OCI-LY7 (cell line): ENCODE measurements at regions of chr12 and their contacts with region 1.

Region 1: GRCh38 chr12:15522565-15523187 is 200.4 kb downstream of the PTPRO start:
- DNase-seq: peak; percentile 62
- H3K4me3 ChIP-seq: no peak overlapping the region
- H3K27ac ChIP-seq: no peak overlapping the region
- H3K4me1 ChIP-seq: peaks cover 15% of the 10 kb centered on the region
- CTCF ChIP-seq: peak; percentile 86

Region 2: DNA sequence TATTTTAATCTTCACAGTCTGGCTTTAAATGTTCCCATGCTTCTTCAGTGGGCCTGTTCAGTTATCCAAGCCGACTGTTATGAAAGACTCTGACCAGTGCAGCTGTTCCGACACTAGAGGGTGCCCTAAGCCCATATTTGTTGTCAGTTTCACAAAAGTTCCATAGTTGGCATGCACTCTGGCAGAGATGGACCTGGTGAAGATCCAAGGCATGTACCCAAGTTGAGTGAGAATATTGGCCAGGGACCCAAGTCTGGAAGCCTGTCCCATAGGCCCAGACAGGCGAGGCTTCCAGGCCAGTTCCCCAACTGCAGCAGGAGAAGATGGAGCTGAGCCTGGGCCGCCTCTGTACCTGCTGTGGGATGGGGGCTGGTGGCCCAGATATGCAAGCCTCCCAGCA is 798.9 kb before region 1 on chr12:
- CTCF ChIA-PET with region 1: no interaction called
- POLR2A ChIA-PET with region 1: no interaction called
- intact Hi-C with region 1: loop called (anchors 10 kb)
- DNase-seq: peak; percentile 73
- H3K4me3 ChIP-seq: no peak overlapping the region
- H3K27ac ChIP-seq: no peak overlapping the region
- H3K4me1 ChIP-seq: no peaks in the 10 kb centered on the region
- CTCF ChIP-seq: peak; percentile 89

Region 3: GRCh38 chr12:14803011-14803829 is 719.5 kb before region 1 on chr12 and contains the starts of genes C12orf60 and WBP11:
- CTCF ChIA-PET with region 1: no interaction called
- POLR2A ChIA-PET with region 1: no interaction called
- intact Hi-C with region 1: loop called (anchors 10 kb)
- DNase-seq: peak; percentile 98
- H3K4me3 ChIP-seq: peak within 1 kb of the TSS; percentile 77
- H3K27ac ChIP-seq: peak within 1 kb of the TSS; percentile 66
- H3K4me1 ChIP-seq: peaks cover 36% of the 10 kb centered on the region
- CTCF ChIP-seq: no peak
- total RNA-seq, gene C12orf60: 2.8 and 3.2 TPM in 2 replicates
- total RNA-seq, gene WBP11: 16.5 and 22.8 TPM in 2 replicates

Region 4: DNA sequence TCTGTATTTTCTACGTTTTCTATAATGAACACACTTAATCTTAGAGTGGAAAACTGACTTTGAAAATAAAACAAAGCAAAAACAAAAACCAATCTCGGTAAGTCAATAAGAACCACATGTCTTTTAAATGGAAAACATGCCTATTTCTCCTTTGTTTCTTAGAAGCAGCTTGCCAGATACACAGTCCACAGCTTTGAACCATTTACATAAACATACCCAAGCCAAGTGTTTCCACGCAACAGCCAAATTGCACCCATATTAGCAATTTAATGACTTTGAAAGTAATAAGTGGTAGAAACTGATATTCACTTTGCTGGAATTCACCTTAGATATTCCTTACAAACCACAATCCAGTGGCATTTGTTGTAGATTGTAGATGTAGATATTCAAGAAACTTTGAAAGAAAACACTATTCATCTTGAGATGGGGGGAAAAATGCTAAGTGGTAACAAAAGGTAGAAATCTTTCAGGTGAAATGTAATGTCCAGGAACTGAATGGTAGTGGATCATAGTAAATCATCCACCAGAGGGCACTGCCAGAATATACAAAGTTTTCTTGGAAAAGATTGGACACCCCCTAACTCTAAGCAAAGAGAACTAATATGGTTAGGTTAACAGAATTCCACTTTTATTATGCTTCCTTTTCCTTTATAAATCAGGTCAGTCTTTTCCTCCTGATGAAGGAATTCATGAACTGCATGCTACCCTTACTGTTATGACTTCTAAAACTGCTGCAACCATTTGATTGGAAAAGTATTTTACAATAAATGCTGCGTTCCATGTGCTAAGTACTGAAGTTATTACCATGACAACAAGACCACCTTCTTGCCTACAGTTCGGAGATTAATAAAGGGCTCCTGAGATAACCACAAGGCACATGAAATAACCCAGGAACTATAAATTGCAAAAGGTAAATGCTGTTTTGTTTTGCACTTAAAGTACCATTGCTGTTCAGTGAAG is 371.2 kb before region 1 on chr12:
- CTCF ChIA-PET with region 1: no interaction called
- POLR2A ChIA-PET with region 1: no interaction called
- intact Hi-C with region 1: loop called (anchors 10 kb)
- DNase-seq: peak; percentile 21
- H3K4me3 ChIP-seq: no peak overlapping the region
- H3K27ac ChIP-seq: no peak overlapping the region
- H3K4me1 ChIP-seq: no peaks in the 10 kb centered on the region
- CTCF ChIP-seq: peak; percentile 77

Region 5: GRCh38 chr12:15276088-15276698 is 246.5 kb before region 1 on chr12:
- CTCF ChIA-PET with region 1: no interaction called
- POLR2A ChIA-PET with region 1: interaction called, 6 read pairs
- intact Hi-C with region 1: loop called (anchors 1 kb)
- DNase-seq: peak; percentile 14
- H3K4me3 ChIP-seq: no peak overlapping the region
- H3K27ac ChIP-seq: no peak overlapping the region
- H3K4me1 ChIP-seq: no peaks in the 10 kb centered on the region
- CTCF ChIP-seq: peak; percentile 90

Region 6: GRCh38 chr12:15629108-15629507 is 106.4 kb after region 1 on chr12:
- CTCF ChIA-PET with region 1: no interaction called
- POLR2A ChIA-PET with region 1: no interaction called
- intact Hi-C with region 1: no loop called
- DNase-seq: no peak
- H3K4me3 ChIP-seq: no peak overlapping the region
- H3K27ac ChIP-seq: no peak overlapping the region
- H3K4me1 ChIP-seq: no peaks in the 10 kb centered on the region
- CTCF ChIP-seq: no peak